ENCODE measurements at regions of chr6 and their contacts with region 1.

Region 1: GRCh38 chr6:77466055-77466450 is 2.8 kb upstream of the HTR1B start:
- DNase-seq: no peak

Region 2: DNA sequence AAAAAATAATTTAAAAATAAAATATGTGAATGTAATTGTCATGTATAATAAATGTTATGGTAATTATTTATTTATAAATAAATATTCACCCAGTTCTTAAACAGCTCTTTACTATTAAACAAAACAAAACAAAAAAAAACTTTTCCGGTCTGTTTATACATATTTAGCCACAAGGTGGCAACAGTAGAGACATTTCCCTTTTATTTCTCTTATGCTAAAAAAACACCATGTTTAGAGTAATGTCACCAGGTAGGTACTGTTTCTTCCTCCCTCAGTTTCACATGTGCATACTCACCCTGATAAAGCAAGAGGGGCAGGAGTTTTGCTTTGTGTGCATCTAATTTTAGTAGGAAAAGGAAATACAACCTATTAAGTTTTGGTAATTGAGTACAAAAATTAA is 783.2 kb before region 1 on chr6:
- intact Hi-C with region 1: loop called (anchors 10 kb)
- DNase-seq: no peak

Measured in cardiac septum (tissue), 1 donor.